Colonic mucosa (tissue), 4 donors: ENCODE measurements at regions of chr12 and their contacts with region 1.

Region 1: DNA sequence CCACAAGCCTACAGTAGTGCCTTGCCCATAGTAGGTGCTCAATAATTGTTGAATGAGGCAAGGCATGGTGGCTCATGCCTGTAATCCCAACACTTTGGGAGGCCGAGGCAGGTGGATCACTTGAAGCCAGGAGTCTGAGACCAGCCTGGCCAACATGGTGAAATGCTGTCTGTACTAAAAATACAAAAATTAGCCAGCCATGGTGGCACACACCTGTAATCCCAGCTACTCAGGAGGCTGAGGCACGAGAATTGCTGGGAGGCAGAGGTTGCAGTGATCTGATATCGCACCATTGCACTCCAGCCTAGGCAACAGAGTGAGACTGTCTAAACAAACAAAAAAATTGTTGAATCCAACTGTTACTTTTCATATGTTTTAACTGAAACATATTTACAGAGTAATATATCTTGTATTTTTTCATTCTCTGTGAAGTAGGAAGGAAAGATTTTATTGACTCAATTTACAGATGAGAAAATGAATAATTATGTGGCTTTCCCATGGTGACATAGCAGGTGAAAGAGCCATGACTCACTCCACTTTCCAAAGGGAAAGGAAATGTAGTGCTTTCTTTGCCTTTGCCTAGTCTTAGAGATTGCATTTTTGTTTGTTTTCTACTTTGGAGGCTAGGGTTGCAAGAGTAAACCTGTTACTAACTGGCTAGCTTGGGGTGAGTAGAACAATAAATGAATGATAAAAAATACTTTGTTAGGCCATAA is 95.4 kb upstream of the SLC38A4 start:
- DNase-seq: no peak
- H3K4me3 ChIP-seq: no peak overlapping the region
- H3K27ac ChIP-seq: no peak overlapping the region
- H3K4me1 ChIP-seq: no peaks in the 10 kb centered on the region
- H3K27me3 ChIP-seq: no peaks in the 10 kb centered on the region
- CTCF ChIP-seq: no peak

Region 2: DNA sequence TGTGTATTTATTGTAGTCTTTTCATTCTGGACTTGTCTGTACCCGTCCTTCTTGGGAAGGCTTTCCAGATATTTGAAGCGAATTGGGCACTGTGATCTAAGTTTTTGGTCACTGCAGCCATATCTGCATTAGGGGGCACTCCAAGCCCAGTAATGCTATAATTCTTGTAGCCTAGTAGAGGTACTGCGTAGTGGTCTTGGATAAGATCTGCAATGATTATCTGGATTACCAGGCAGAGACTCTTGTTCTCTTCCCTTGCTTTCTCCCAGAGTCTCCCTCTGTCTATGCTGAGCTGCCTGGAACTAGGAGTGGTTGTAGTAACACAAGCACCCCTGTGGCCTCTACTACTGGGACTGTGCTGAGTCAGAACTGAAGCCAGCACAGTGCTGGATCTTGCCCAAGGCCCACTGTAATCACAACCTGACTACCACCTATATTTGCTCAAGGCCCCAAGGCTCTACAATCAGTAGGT is 578.6 kb before region 1 on chr12:
- intact Hi-C with region 1: loop called (anchors 10 kb)
- DNase-seq: peak; percentile 29
- H3K4me3 ChIP-seq: no peak overlapping the region
- H3K27ac ChIP-seq: no peak overlapping the region
- H3K4me1 ChIP-seq: no peaks in the 10 kb centered on the region
- H3K27me3 ChIP-seq: no peaks in the 10 kb centered on the region
- CTCF ChIP-seq: peak; percentile 50